Activated CD4-positive, alpha-beta T cell treated with anti-CD3 and anti-CD28 coated beads, Interleukin-2, amount 10 ng/mL, durations not matched to agents 24 days and 14 days (primary cell): ENCODE measurements at regions of chr16 and their contacts with region 1.

Region 1: GRCh38 chr16:53054670-53055485 is at the start of gene CHD9:
- DNase-seq: peak; percentile 93
- H3K4me3 Mint-ChIP-seq: peak within 1 kb of the TSS; percentile 86
- H3K27ac Mint-ChIP-seq: peak within 1 kb of the TSS; percentile 86
- H3K4me1 Mint-ChIP-seq: peaks cover 32% of the 10 kb centered on the region
- H3K27me3 Mint-ChIP-seq: no peaks in the 10 kb centered on the region
- total RNA-seq, gene CHD9: 19.6 and 20.7 TPM in 2 replicates

Region 2: GRCh38 chr16:52906281-52906680 is 148.6 kb before region 1 on chr16:
- intact Hi-C with region 1: no loop called
- DNase-seq: no peak
- H3K4me3 Mint-ChIP-seq: no peak overlapping the region
- H3K27ac Mint-ChIP-seq: no peak overlapping the region
- H3K4me1 Mint-ChIP-seq: no peaks in the 10 kb centered on the region
- H3K27me3 Mint-ChIP-seq: peaks cover 1% of the 10 kb centered on the region

Region 3: DNA sequence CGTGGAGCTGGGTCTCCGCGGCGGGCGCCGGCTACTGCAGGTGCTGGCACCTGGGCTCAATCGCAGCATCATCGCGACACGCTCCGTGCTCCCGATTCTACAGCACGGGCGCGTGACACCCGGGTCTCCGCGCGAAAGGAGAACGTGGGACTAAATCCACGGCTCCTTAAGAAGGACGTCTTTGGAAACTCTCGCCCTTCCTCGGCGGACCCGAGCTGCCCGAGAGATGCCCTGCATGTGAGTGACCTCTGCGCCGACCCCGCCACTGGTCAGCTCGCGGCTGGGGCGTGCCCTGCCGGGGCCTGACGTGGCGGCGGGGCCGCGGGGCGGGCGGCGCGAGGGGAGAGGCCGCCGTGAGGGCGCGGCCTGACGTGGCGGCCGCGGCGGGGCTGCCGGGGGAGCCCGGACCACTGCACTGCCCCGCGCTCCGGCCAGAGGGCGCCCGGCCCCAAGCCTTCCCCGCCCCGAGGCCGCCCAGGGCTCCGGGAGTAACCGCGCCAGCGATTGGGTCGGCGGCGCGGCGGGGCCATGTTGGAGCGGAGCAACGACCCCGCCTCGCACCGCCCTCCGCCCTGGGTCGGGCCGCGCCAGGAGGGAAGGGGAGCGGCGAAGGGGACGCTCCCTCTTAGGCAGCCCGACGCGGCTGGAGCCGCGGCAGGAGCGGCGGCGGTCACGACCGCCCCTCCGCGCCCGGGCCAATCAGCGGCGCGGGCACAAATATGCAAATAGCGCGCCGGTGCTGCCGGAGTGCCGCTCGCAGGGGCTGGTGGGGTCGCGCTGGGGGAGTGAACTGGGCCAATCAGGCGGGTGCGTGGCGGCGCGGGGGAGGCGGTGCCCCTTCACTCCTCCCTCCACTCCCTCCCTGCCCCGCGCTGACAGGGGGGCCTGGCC is 75.5 kb after region 1 on chr16:
- intact Hi-C with region 1: loop called (anchors 1 kb)
- DNase-seq: peak; percentile 98
- H3K4me3 Mint-ChIP-seq: peak overlapping the region; percentile 86
- H3K27ac Mint-ChIP-seq: peak overlapping the region; percentile 77
- H3K4me1 Mint-ChIP-seq: peaks cover 8% of the 10 kb centered on the region
- H3K27me3 Mint-ChIP-seq: no peaks in the 10 kb centered on the region

Region 4: DNA sequence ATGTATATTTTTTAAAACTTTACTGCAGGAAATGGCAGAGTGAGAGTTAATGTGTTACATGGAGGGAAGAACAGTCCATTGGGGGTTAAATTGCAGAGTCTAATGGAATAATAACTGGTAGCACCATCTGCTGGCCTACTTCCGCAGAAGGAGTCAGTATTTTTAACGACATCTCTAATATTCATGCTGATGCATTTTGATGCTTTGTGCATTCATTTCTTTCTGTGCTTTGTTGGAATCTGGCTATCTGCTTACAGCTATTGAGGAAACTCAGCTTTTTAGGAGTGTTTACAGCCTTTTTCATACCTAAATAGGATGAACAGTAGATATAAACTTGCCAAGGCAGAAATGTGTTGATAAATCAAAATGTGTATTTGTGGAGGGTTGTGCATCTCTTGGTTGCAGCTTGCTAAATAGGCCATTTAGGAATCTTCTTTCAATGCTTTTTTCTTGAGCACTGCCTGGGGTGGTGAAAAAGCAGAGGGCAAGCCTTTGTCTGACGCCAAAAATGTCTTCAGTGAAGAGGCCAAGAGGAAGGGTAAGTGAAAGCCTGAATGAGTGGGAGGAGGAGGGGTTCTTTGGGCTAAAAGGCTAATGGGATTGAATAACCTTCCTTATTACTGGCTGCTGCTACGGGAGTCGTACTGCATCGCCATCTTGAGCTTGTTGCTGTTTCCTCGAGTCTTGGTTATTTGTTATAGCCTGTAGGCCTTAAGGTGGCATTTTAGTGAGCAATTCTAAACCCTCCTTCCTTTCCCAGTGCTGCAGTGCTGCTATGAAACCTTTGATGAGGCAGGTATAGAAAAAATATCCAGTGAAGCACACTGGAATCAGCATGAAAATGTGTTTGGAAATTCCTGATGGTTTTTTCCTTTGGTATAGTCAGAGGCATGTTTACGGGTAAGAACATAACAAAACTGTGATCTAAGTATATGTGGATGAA is 153.2 kb after region 1 on chr16:
- intact Hi-C with region 1: loop called (anchors 2 kb)
- DNase-seq: peak; percentile 63
- H3K4me3 Mint-ChIP-seq: peak overlapping the region; percentile 78
- H3K27ac Mint-ChIP-seq: peak overlapping the region; percentile 87
- H3K4me1 Mint-ChIP-seq: peaks cover 11% of the 10 kb centered on the region
- H3K27me3 Mint-ChIP-seq: no peaks in the 10 kb centered on the region

Region 5: GRCh38 chr16:53372992-53373871 is 318.4 kb after region 1 on chr16:
- intact Hi-C with region 1: loop called (anchors 10 kb)
- DNase-seq: peak; percentile 93
- H3K4me3 Mint-ChIP-seq: peak overlapping the region; percentile 84
- H3K27ac Mint-ChIP-seq: no peak overlapping the region
- H3K4me1 Mint-ChIP-seq: peaks cover 11% of the 10 kb centered on the region
- H3K27me3 Mint-ChIP-seq: peaks cover 21% of the 10 kb centered on the region

Region 6: DNA sequence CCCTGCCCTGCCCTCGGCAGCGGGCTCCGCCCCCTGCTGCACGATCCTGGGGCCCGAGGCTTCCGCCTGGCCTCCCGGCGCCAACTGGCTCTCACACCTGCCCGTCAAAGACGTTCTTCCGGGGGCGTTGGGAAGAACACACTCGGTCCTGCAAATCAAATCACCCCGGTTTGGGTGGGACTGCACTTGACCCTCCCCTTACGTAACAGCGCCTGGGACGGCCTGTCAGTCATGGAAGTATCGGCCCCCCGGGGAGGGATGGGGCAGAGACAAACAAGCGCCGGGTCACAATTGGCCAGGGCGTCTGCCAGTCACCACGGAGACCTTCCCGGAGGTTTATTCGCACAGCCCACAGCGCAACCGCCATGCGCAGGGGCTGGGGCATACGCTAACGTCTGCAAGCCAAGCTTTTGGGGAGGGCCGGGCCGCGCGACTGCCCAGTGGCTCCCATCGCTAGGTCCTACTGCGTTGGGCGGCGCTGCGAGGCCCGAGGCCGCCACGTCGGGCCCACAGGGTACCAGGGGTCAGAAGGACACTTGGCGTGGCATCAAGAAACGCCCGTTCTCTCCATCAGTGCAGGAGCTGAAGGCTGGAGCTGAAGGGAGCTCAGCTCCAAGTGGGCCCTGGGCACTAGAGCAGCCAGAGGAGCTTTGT is 448.5 kb after region 1 on chr16:
- intact Hi-C with region 1: loop called (anchors 5 kb)
- DNase-seq: peak; percentile 100
- H3K4me3 Mint-ChIP-seq: peak overlapping the region; percentile 94
- H3K27ac Mint-ChIP-seq: peak overlapping the region; percentile 94
- H3K4me1 Mint-ChIP-seq: peaks cover 39% of the 10 kb centered on the region
- H3K27me3 Mint-ChIP-seq: no peaks in the 10 kb centered on the region